Breast epithelium (tissue), 4 donors: ENCODE measurements at regions of chr3 and their contacts with region 1.

Region 1: DNA sequence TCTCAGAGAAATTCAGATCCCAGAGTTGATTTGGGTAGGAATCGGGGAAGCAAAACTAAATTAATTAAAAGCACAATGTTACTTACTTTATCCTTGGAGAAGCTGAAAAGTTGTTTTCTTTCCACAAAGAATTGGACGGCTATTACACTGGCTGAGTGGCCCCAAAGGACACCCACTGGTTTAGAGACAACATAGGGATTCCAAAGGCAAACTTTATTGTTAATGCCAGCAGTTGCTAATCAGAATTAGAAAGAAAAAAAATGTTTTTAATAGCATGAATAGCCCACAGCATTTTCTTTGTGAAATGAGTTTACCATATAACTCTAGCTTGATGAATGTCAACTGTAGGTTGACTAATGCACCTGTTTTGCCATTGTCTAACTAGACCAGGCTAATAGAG is 51.7 kb downstream of the WDR49 start:
- DNase-seq: no peak
- H3K4me3 ChIP-seq: no peak overlapping the region
- H3K27ac ChIP-seq: no peak overlapping the region
- H3K4me1 ChIP-seq: no peaks in the 10 kb centered on the region
- H3K27me3 ChIP-seq: no peaks in the 10 kb centered on the region
- CTCF ChIP-seq: no peak
- POLR2A ChIP-seq: no peak

Region 2: GRCh38 chr3:167346171-167346570 is 255.9 kb before region 1 on chr3:
- intact Hi-C with region 1: loop called (anchors 5 kb)
- DNase-seq: no peak
- H3K4me3 ChIP-seq: no peak overlapping the region
- H3K27ac ChIP-seq: no peak overlapping the region
- H3K4me1 ChIP-seq: no peaks in the 10 kb centered on the region
- H3K27me3 ChIP-seq: no peaks in the 10 kb centered on the region
- CTCF ChIP-seq: no peak
- POLR2A ChIP-seq: no peak

Region 3: GRCh38 chr3:167662919-167663400 is 60.9 kb after region 1 on chr3:
- intact Hi-C with region 1: no loop called
- DNase-seq: no peak
- H3K4me3 ChIP-seq: no peak overlapping the region
- H3K27ac ChIP-seq: no peak overlapping the region
- H3K4me1 ChIP-seq: no peaks in the 10 kb centered on the region
- H3K27me3 ChIP-seq: no peaks in the 10 kb centered on the region
- CTCF ChIP-seq: no peak
- POLR2A ChIP-seq: no peak